ENCODE measurements at regions of chr11 and their contacts with region 1.

Region 1: GRCh38 chr11:118907051-118908042 is 18.4 kb downstream of the BCL9L start:
- DNase-seq: peak; percentile 87 to 90
- H3K4me3 ChIP-seq: no peak overlapping the region
- H3K27ac ChIP-seq: peak overlapping the region; percentile 6 to 68 (median 32)
- H3K4me1 ChIP-seq: peaks cover 39 to 54% of the 10 kb centered on the region in 2 donors
- H3K27me3 ChIP-seq: no peaks in the 10 kb centered on the region
- CTCF ChIP-seq: peak; percentile 76 to 99 (median 94)
- POLR2A ChIP-seq: no peak

Region 2: DNA sequence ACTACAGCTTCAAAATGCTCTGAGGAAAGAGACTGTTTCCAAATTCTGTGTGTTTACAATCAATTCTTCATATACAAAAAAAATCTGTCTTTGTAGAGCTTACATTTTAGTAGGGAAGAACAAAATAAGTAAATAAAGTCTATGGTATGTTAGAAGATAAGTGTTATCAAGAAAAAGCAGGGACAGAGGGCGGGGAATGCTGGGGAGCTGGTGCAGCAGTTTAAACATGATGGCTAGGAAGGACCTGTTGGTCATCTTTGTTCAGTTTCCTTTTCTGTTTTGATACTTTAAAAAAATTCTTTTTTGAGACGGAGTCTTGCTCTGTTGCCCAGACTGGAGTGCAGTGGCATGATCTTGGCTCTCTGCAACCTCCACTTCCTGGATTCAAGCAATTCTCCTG is 360.2 kb before region 1 on chr11:
- intact Hi-C with region 1: no loop called
- DNase-seq: no peak
- H3K4me3 ChIP-seq: no peak overlapping the region
- H3K27ac ChIP-seq: no peak overlapping the region
- H3K4me1 ChIP-seq: no peaks in the 10 kb centered on the region
- H3K27me3 ChIP-seq: no peaks in the 10 kb centered on the region
- CTCF ChIP-seq: no peak
- POLR2A ChIP-seq: no peak

Region 3: DNA sequence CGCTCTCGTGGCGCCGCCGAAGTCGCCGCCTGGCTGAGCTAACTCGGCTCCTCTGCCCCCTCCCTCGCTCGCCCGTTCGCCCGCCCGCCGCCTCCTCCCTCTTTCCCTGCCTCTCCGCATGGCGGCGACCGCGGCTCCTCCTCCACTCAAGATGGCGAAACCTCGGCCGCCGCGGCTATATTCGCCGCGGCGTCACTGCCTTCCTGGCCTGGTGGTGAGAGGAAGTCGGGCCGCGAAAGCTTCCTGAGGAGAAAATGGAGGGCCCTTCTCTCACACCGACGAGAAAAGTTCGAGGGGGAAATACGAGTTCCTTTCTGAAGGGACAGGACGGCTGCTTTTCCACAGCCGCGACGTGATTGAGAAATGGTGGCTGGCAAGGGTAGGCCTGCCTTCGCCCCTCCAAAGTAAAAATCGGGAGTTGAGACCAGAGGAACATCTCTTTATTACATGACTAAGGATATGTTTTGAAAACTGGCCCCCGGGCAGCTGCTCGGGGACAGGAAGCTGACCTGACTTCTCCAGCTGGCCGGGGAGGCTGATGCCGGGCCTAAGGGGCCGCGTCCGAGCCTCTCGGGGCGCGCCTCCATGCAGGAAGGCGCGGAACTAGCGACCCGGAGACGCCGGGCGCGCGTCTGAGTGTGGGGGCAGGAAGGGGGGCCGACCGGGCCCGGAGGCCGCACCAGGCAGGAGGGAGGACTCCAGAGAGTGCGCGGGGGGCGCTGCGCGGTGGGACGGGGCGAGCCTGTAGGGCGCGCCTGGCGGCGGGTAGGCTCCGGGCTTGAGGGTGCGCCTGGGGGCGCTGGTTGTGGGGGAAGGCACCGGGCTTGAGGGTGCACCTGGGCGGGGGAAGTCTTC is 116.0 kb before region 1 on chr11 and contains the start of gene DDX6:
- intact Hi-C with region 1: loop called (anchors 10 kb)
- DNase-seq: peak; percentile 91
- H3K4me3 ChIP-seq: peak within 1 kb of the TSS; percentile 77 to 86 (median 82)
- H3K27ac ChIP-seq: peak within 1 kb of the TSS; percentile 99 to 100 (median 100)
- H3K4me1 ChIP-seq: peaks cover 20 to 27% of the 10 kb centered on the region in 2 donors
- H3K27me3 ChIP-seq: no peaks in the 10 kb centered on the region
- CTCF ChIP-seq: peak in 3 of 6 experiments; percentile 12 to 19 (median 19)
- POLR2A ChIP-seq: peak; percentile 88 to 97
- total RNA-seq, gene DDX6: 110 to 178 (median 142) TPM

Region 4: GRCh38 chr11:118921929-118922744 is 14.8 kb after region 1 on chr11:
- intact Hi-C with region 1: loop called (anchors 2 kb)
- DNase-seq: peak; percentile 90
- H3K4me3 ChIP-seq: peak overlapping the region in 1 of 3 donors; percentile 92
- H3K27ac ChIP-seq: peak overlapping the region; percentile 97 to 99 (median 97)
- H3K4me1 ChIP-seq: peaks cover 72 to 76% of the 10 kb centered on the region in 2 donors
- H3K27me3 ChIP-seq: no peaks in the 10 kb centered on the region
- CTCF ChIP-seq: no peak
- POLR2A ChIP-seq: peak in 1 of 2 donors; percentile 61

Region 5: GRCh38 chr11:118956094-118956846 is 48.9 kb after region 1 on chr11 and contains the start of gene UPK2:
- intact Hi-C with region 1: loop called (anchors 2 kb)
- DNase-seq: peak; percentile 90 to 92
- H3K4me3 ChIP-seq: no peak within 1 kb of the TSS
- H3K27ac ChIP-seq: no peak within 1 kb of the TSS
- H3K4me1 ChIP-seq: no peaks in the 10 kb centered on the region
- H3K27me3 ChIP-seq: no peaks in the 10 kb centered on the region
- CTCF ChIP-seq: peak; percentile 88 to 98 (median 94)
- POLR2A ChIP-seq: no peak
- total RNA-seq, gene UPK2: not detected